ENCODE measurements at regions of chr9 and their contacts with region 1.

Region 1: DNA sequence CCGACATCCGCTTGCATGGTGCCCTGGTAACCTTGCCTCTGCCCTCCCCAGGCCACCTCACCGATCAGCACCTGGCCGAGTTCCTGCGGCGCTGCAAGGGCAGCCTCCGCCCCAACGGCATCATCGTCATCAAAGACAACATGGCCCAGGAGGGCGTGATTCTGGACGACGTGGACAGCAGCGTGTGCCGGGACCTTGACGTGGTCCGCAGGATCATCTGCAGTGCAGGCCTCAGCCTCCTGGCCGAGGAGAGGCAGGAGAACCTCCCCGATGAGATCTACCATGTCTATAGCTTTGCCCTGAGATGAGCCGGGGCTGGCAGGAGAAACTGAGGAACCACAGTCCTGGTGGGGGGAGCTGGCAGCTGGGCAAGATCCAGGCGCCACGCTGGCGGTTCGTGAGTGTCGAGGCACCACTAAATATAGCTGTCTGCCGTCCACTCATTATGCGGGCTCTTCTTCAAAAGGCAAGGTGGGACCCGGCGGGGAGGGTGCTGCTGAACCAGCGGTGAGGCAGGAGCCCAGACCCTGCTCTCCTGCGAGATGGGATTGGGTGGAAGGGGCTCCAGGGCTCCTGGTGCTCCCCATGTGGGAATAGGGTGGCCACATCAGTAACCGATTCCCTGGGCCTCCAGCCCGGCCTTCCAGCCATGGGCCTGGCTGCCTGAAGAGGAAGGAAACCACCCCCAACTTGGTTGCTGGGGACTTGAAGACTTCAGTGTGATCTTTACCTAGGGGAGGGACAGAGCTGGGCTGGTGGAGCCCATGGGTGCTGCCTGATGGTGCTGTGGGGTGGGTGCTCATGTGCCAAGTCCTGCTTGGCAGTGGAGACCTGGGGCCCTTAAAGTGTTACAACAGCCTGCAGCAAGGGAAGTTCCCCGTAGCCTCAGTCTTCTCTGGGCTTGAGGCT is 6.5 kb downstream of the ASB6 start:
- DNase-seq: no peak
- H3K4me3 ChIP-seq: no peak overlapping the region
- H3K27ac ChIP-seq: no peak overlapping the region
- H3K4me1 ChIP-seq: peaks cover 21% of the 10 kb centered on the region
- H3K27me3 ChIP-seq: no peaks in the 10 kb centered on the region
- CTCF ChIP-seq: no peak

Region 2: GRCh38 chr9:129550199-129550839 is 85.1 kb before region 1 on chr9:
- CTCF ChIA-PET with region 1: no interaction called
- POLR2A ChIA-PET with region 1: interaction called, 13 read pairs
- intact Hi-C with region 1: no loop called
- DNase-seq: peak; percentile 74
- H3K4me3 ChIP-seq: peak overlapping the region; percentile 51
- H3K27ac ChIP-seq: peak overlapping the region; percentile 65
- H3K4me1 ChIP-seq: peaks cover 8% of the 10 kb centered on the region
- H3K27me3 ChIP-seq: no peaks in the 10 kb centered on the region
- CTCF ChIP-seq: no peak

Measured in A673 (cell line).